A673 (cell line): ENCODE measurements at regions of chr1 and their contacts with region 1.

Region 1: DNA sequence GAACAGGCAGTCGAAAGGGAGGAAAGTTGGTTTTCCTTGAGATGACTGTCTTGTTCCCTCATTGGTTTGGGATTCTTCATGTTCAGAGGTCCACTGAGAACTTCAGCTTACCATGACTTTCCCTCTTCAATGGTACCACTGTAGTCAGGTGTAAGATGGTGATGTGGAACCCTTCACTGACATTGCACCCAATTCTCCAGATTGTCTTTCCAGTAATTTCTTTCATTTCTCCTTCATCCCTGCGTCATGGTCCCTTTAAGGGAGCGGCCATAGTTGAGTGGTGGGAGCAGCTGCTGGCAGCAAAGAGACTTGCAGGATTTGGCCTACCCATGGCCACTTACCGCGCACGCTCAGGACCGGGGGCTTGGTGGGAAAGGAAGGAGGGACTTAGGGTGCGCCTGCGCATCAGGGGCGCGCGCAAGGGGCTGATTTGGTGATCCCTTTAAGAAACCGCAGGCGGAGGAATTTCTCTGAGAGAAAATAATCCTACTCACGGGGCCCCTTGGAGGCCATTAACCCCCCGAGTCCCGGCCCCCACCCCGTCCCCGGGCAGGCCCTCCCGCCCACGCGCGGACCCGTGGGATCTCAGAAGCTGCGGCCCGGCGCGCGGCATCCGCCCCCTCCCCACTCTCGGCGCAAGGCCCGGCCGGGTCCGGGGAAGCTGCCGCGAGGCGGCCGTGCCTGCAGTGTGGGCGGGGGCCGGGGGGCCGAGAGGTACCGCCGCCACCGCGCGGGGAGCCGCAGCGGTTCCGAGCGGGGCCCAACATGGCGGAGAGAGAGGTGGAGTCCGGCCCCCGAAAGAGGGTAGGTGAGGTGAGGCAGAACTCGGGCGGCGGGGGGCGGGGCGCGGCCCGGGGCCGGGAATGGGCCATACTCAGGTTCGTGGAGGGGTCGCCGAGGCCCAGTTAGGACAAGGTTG is at the start of gene ZMYM4:
- DNase-seq: peak; percentile 99
- H3K4me3 ChIP-seq: peak within 1 kb of the TSS; percentile 93
- H3K27ac ChIP-seq: peak within 1 kb of the TSS; percentile 98
- H3K4me1 ChIP-seq: peaks cover 3% of the 10 kb centered on the region
- H3K27me3 ChIP-seq: no peaks in the 10 kb centered on the region
- CTCF ChIP-seq: no peak
- total RNA-seq, gene ZMYM4: 80.0 and 83.5 TPM in 2 replicates

Region 2: DNA sequence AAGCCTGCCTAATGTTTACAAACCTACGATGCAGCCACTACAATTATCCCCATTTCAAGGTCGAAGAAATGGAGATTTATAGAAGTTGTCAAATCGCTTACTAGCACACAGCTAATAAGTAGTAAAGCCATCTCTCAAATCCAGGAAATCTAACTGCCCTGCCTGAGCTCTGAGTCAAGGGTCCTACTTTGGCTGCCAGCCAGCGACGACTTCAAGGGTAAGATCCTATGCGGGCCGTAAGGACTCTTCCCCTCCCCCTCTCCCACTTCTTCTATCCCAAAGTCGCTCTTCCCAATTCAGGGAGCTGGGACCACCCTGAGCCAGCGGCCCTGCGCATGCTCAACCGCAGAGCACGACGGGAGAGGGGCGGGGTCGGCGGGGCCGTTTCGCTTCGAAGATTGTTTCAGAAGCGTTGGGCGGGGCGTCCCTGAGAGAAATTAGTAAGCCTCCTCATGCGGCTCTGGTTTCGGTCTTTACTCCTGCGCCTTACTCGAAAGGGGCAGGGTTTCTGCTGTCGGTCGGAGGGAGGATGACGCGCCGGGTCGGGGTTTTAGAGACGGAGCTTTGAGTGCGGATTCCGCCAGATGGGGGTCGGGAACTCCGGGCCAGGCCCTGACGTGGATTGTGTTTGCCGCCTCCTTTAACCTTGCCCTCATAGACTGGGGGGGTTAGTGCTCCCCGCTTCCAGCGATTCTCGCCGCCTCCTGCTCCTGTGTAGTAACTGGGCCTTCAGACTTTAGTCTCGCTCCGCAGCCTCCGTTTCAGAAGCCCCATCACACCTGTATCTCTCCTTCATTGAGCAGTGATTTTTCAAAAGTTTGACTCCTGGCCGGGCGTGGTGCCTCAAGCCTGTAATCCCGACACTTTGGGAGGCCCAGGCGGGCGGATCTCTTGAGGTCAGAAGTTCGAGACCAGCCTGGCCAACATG is 189.3 kb before region 1 on chr1 and contains the start of gene ZMYM1:
- CTCF ChIA-PET with region 1: no interaction called
- POLR2A ChIA-PET with region 1: no interaction called
- intact Hi-C with region 1: no loop called
- DNase-seq: peak; percentile 93
- H3K4me3 ChIP-seq: peak within 1 kb of the TSS; percentile 59
- H3K27ac ChIP-seq: peak within 1 kb of the TSS; percentile 72
- H3K4me1 ChIP-seq: peaks cover 14% of the 10 kb centered on the region
- H3K27me3 ChIP-seq: no peaks in the 10 kb centered on the region
- CTCF ChIP-seq: no peak
- total RNA-seq, gene ZMYM1: 32.2 and 36.1 TPM in 2 replicates

Region 3: GRCh38 chr1:35369922-35370671 is 101.6 kb after region 1 on chr1:
- CTCF ChIA-PET with region 1: no interaction called
- POLR2A ChIA-PET with region 1: no interaction called
- intact Hi-C with region 1: loop called (anchors 2 kb)
- DNase-seq: peak; percentile 95
- H3K4me3 ChIP-seq: no peak overlapping the region
- H3K27ac ChIP-seq: peak overlapping the region; percentile 78
- H3K4me1 ChIP-seq: peaks cover 24% of the 10 kb centered on the region
- H3K27me3 ChIP-seq: no peaks in the 10 kb centered on the region
- CTCF ChIP-seq: no peak

Region 4: GRCh38 chr1:35475856-35476674 is 207.5 kb after region 1 on chr1:
- CTCF ChIA-PET with region 1: no interaction called
- POLR2A ChIA-PET with region 1: no interaction called
- intact Hi-C with region 1: no loop called
- DNase-seq: no peak
- H3K4me3 ChIP-seq: no peak overlapping the region
- H3K27ac ChIP-seq: no peak overlapping the region
- H3K4me1 ChIP-seq: no peaks in the 10 kb centered on the region
- H3K27me3 ChIP-seq: no peaks in the 10 kb centered on the region
- CTCF ChIP-seq: no peak